ENCODE measurements at regions of chr5 and their contacts with region 1.

Region 1: DNA sequence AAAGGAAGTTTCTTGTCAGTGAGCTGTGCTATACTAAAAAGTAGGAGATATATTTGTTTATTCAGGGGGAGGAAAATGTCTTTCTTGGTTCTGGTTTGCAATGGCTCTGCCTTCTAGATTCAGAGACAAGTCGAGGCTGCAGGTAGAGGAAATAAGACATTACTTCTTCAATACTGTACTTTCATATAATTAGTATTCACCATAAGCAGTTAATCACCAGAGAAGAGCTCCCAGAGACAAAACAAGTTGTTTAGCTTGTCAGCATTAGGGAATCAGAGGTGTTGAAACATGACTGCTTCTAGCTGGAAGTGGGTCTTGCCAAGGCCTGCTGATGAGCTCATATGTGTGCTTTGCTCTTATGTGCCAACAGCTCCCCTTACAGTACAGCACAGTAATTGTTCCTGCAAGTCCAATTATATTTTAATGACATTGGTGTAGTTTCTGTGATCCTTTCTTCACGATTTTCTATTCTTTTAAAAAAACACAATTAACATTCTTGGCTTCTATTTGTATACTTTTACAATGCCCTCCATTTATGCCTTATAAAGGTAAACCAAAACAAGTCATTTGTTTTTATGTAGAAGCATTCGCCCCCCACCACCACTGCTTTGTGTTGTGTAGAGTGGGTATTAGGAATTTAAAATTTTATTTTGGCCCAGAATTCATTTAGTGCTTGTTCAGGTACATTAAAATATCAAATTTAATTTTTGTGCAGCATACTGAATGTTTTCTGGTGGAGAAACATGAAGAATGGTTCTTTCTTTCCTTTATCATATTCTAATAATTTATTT is 112.2 kb downstream of the RPS23 start:
- DNase-seq: peak; percentile 53
- H3K4me3 ChIP-seq: no peak overlapping the region; a peak in 1 of 4 replicates
- H3K27ac ChIP-seq: peak overlapping the region; percentile 82 to 99
- H3K4me1 ChIP-seq: peaks cover 9 to 47% of the 10 kb centered on the region in 2 experiments
- H3K27me3 ChIP-seq: no peaks in the 10 kb centered on the region
- CTCF ChIP-seq: peak; percentile 91
- EP300 ChIP-seq: no peak
- RAD21 ChIP-seq: peak; percentile 97

Region 2: GRCh38 chr5:81425569-81425968 is 740.4 kb before region 1 on chr5:
- CTCF ChIA-PET with region 1: interaction called, 18 read pairs
- POLR2A ChIA-PET with region 1: interaction called, 3 read pairs
- DNase-seq: peak; percentile 45
- H3K4me3 ChIP-seq: no peak overlapping the region; a peak in 1 of 4 replicates
- H3K27ac ChIP-seq: peak overlapping the region in 1 of 2 experiments; percentile 30; a peak in 1 of 4 replicates
- H3K4me1 ChIP-seq: peaks cover 2 to 25% of the 10 kb centered on the region in 2 experiments
- H3K27me3 ChIP-seq: no peaks in the 10 kb centered on the region
- CTCF ChIP-seq: peak; percentile 76
- EP300 ChIP-seq: no peak
- RAD21 ChIP-seq: peak; percentile 75

Region 3: DNA sequence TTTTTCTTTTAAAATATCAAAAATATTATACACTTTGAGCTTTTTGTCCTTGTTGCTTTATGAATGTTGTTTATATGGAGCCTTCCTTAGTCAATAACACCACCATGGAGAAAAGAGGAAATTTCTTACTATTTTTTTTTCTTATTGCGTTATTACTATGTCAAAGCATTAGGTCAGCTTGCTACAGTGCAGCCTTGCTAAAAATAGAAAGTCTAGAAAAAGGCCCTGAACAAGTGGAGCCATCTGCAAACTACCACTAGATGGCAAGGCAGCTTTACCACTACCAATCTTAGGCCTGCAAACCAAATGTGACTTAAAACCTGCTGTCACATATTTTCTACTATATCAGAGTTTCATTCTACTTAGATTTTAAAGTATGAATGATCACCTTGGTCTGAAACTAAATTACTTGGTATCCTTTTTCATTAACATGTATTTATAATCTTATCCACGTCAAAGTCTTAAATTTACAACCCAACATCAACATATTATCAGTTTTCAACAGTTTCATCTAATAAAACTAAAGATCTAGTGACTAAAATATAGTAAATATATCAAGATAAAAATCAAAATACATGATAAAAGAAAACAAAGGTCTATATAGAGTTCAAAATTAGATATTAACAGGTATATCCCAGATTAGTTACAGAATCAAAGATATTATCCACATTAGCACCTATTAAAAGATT is 658.9 kb before region 1 on chr5:
- CTCF ChIA-PET with region 1: interaction called, 15 read pairs
- POLR2A ChIA-PET with region 1: no interaction called
- DNase-seq: peak; percentile 66
- H3K4me3 ChIP-seq: no peak overlapping the region; a peak in 1 of 4 replicates
- H3K27ac ChIP-seq: peak overlapping the region in 1 of 2 experiments; percentile 50; a peak in 2 of 4 replicates
- H3K4me1 ChIP-seq: peaks cover 0 to 9% of the 10 kb centered on the region in 2 experiments; a peak in 2 of 4 replicates
- H3K27me3 ChIP-seq: no peaks in the 10 kb centered on the region
- CTCF ChIP-seq: peak; percentile 96
- EP300 ChIP-seq: peak in 1 of 2 experiments; percentile 29; a peak in 1 of 4 replicates
- RAD21 ChIP-seq: peak; percentile 98

Region 4: DNA sequence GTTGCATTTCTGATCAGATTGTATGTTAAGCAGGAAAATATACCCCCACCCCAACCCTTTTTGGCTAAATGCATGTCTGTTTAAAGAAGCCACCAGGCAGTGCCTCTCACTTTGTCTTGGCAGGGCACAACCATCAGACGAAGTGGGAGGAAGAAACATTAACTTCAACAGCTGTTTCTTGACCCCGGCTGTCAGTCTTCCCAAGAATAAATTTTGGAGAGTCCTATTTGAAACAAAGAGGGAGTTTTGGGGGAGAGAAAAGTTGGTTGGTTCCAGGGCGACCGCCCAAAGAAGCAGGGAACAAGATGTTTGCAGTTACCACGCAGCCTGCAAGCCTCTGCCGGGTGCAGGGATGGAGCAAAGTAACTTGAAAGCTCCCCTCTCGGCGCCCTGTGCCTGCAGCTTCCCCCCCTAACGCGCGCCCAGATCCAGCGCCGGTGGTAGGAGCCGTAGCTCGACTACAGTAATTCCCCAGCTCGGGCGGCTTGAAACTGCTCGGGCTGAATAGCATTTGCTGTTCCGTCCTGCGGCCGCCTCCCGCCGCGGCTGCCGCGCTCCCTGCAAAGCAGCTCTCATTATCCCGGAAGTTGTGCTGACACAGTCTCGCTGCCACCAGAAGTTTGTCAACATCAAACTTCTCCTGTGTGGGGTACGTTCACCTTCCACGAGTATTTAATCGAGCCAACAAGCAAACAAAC is 314.3 kb before region 1 on chr5:
- CTCF ChIA-PET with region 1: interaction called, 28 read pairs
- POLR2A ChIA-PET with region 1: no interaction called
- DNase-seq: peak; percentile 90
- H3K4me3 ChIP-seq: peak overlapping the region; percentile 45 to 54
- H3K27ac ChIP-seq: peak overlapping the region; percentile 92 to 99
- H3K4me1 ChIP-seq: peaks cover 55 to 56% of the 10 kb centered on the region in 2 experiments
- H3K27me3 ChIP-seq: no peaks in the 10 kb centered on the region
- CTCF ChIP-seq: no peak
- EP300 ChIP-seq: peak; percentile 99 to 100
- RAD21 ChIP-seq: peak; percentile 69

Region 5: GRCh38 chr5:81856948-81857928 is 308.7 kb before region 1 on chr5:
- CTCF ChIA-PET with region 1: interaction called, 28 read pairs
- POLR2A ChIA-PET with region 1: interaction called, 5 read pairs
- DNase-seq: peak; percentile 81
- H3K4me3 ChIP-seq: peak overlapping the region; percentile 28 to 37; a peak in 3 of 4 replicates
- H3K27ac ChIP-seq: peak overlapping the region; percentile 70 to 98
- H3K4me1 ChIP-seq: peaks cover 46 to 50% of the 10 kb centered on the region in 2 experiments
- H3K27me3 ChIP-seq: no peaks in the 10 kb centered on the region
- CTCF ChIP-seq: peak; percentile 52
- EP300 ChIP-seq: peak; percentile 51 to 87; a peak in 3 of 4 replicates
- RAD21 ChIP-seq: peak; percentile 35

Region 6: GRCh38 chr5:82107267-82107666 is 58.7 kb before region 1 on chr5:
- CTCF ChIA-PET with region 1: interaction called, 14 read pairs
- POLR2A ChIA-PET with region 1: no interaction called
- DNase-seq: no peak
- H3K4me3 ChIP-seq: no peak overlapping the region
- H3K27ac ChIP-seq: no peak overlapping the region
- H3K4me1 ChIP-seq: peaks cover 4 to 14% of the 10 kb centered on the region in 2 experiments; a peak in 2 of 4 replicates
- H3K27me3 ChIP-seq: no peaks in the 10 kb centered on the region
- CTCF ChIP-seq: peak; percentile 61
- EP300 ChIP-seq: no peak
- RAD21 ChIP-seq: peak; percentile 58

Region 7: GRCh38 chr5:82287625-82288024 is 121.7 kb after region 1 on chr5:
- CTCF ChIA-PET with region 1: no interaction called
- POLR2A ChIA-PET with region 1: no interaction called
- DNase-seq: no peak
- H3K4me3 ChIP-seq: no peak overlapping the region
- H3K27ac ChIP-seq: no peak overlapping the region
- H3K4me1 ChIP-seq: no peaks in the 10 kb centered on the region
- H3K27me3 ChIP-seq: no peaks in the 10 kb centered on the region
- CTCF ChIP-seq: no peak
- EP300 ChIP-seq: no peak
- RAD21 ChIP-seq: no peak